Caco-2 (cell line): ENCODE measurements at regions of chr17 and their contacts with region 1.

Region 1: DNA sequence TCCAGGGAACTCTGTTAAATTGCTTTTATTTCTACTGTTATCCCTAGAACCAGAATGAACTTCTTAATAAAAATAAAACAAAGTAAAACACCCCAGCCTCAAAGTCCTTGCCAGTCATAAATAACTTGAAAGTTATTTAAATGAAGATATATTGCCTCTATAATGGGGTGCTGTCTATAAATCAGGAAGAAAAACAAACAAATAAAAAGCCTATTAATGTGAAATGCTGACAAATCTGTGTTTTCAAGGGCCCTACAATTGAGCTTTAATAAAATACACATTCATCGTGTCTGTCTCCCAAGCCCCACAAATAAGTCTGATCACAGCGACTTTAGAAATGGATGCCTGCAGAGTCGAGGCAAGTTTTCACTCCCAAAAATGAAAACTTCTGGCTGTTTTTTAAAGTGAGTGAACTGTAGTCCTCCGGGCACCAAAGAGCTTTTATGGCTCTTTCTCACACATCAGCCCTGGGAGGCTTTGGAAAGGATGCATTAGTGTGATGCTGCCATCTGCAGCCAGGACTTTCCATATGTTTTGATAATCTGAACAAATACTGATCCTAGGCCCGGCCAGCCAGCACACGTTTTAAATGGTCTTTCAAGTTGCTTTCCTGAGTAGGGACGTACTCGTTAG is 16.4 kb downstream of the NACA2 start:
- DNase-seq: peak; percentile 67 to 73
- H3K4me3 ChIP-seq: no peak overlapping the region
- H3K4me3 Mint-ChIP-seq: no peak overlapping the region
- H3K27ac Mint-ChIP-seq: no peak overlapping the region
- H3K4me1 ChIP-seq: no peaks in the 10 kb centered on the region
- H3K4me1 Mint-ChIP-seq: peaks cover 7% of the 10 kb centered on the region
- H3K27me3 ChIP-seq: no peaks in the 10 kb centered on the region
- H3K27me3 Mint-ChIP-seq: no peaks in the 10 kb centered on the region
- CTCF ChIP-seq: peak; percentile 47 to 59

Region 2: GRCh38 chr17:61551255-61551742 is 23.4 kb before region 1 on chr17:
- CTCF ChIA-PET with region 1: no interaction called
- POLR2A ChIA-PET with region 1: no interaction called
- intact Hi-C with region 1: loop called (anchors 1 kb)
- DNase-seq: peak in 1 of 2 experiments; percentile 52
- H3K4me3 ChIP-seq: no peak overlapping the region
- H3K4me3 Mint-ChIP-seq: no peak overlapping the region
- H3K27ac Mint-ChIP-seq: no peak overlapping the region
- H3K4me1 ChIP-seq: no peaks in the 10 kb centered on the region
- H3K4me1 Mint-ChIP-seq: no peaks in the 10 kb centered on the region
- H3K27me3 ChIP-seq: no peaks in the 10 kb centered on the region
- H3K27me3 Mint-ChIP-seq: peaks cover 6% of the 10 kb centered on the region
- CTCF ChIP-seq: peak; percentile 68 to 74

Region 3: DNA sequence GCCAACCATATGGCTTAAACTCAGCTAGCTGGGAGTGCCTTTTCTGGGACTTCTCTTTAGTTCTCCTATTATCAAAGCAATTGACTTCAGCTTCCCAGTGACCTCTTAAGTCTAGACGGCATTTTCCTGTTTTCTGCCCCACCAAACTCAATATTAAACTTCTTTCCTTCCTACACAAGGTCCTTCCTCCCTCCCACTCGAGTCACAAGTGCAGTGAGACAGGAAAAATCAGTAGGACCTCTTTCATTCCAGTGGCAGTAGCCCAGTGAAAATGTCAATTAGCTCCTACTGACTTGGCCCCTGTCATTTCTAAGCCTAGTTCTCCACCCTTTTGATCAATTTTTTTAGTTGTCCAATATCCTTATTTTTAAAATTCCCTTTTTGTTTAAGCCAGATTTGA is 26.0 kb after region 1 on chr17:
- CTCF ChIA-PET with region 1: no interaction called
- POLR2A ChIA-PET with region 1: no interaction called
- intact Hi-C with region 1: no loop called
- DNase-seq: no peak
- H3K4me3 ChIP-seq: no peak overlapping the region
- H3K4me3 Mint-ChIP-seq: no peak overlapping the region
- H3K27ac Mint-ChIP-seq: no peak overlapping the region
- H3K4me1 ChIP-seq: no peaks in the 10 kb centered on the region
- H3K4me1 Mint-ChIP-seq: no peaks in the 10 kb centered on the region
- H3K27me3 ChIP-seq: no peaks in the 10 kb centered on the region
- H3K27me3 Mint-ChIP-seq: peaks cover 3% of the 10 kb centered on the region
- CTCF ChIP-seq: no peak